Endothelial cell of umbilical vein (primary cell): ENCODE measurements at regions of chr10 and their contacts with region 1.

Region 1: GRCh38 chr10:62689712-62690111 is 114.8 kb upstream of the ADO start:
- DNase-seq: peak; percentile 73
- H3K4me3 ChIP-seq: no peak overlapping the region
- H3K27ac ChIP-seq: peak overlapping the region; percentile 39
- H3K4me1 ChIP-seq: peaks cover 22% of the 10 kb centered on the region
- H3K27me3 ChIP-seq: no peaks in the 10 kb centered on the region
- CTCF ChIP-seq: no peak
- POLR2A ChIP-seq: no peak

Region 2: GRCh38 chr10:62637249-62638061 is 52.3 kb before region 1 on chr10:
- CTCF ChIA-PET with region 1: no interaction called
- POLR2A ChIA-PET with region 1: no interaction called
- dilution Hi-C with region 1: no loop called
- intact Hi-C with region 1: no loop called
- DNase-seq: peak; percentile 3
- H3K4me3 ChIP-seq: no peak overlapping the region
- H3K27ac ChIP-seq: no peak overlapping the region
- H3K4me1 ChIP-seq: peaks cover 5% of the 10 kb centered on the region
- H3K27me3 ChIP-seq: no peaks in the 10 kb centered on the region
- CTCF ChIP-seq: no peak
- POLR2A ChIP-seq: no peak

Region 3: DNA sequence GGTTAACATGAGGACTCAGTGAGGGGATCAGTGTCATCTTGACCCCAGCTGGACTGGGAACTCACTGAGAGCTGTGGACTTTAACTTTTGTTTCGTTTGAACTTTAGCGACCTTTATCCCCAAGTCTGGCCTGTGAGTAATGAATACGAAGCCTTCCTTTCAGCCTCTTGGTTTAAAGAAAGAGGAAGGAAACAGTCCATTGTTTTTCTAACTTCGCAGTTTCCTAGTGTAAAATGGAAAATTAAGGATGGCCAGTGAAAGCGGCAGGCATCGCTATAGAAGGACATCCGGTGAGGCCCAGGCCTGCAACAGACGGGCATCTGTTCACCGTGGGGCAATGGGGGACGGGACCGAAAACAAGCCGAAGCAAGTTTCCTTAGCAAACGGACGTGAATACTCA is 70.7 kb after region 1 on chr10:
- CTCF ChIA-PET with region 1: no interaction called
- POLR2A ChIA-PET with region 1: no interaction called
- dilution Hi-C with region 1: no loop called
- intact Hi-C with region 1: loop called (anchors 1 kb)
- DNase-seq: peak; percentile 83
- H3K4me3 ChIP-seq: no peak overlapping the region
- H3K27ac ChIP-seq: peak overlapping the region; percentile 55
- H3K4me1 ChIP-seq: peaks cover 17% of the 10 kb centered on the region
- H3K27me3 ChIP-seq: peaks cover 0 to 5% of the 10 kb centered on the region in 2 experiments
- CTCF ChIP-seq: no peak
- POLR2A ChIP-seq: no peak